CD8-positive, alpha-beta memory T cell (primary cell): ENCODE measurements at regions of chr17 and their contacts with region 1.

Region 1: GRCh38 chr17:7989781-7990655 is 12.4 kb upstream of the GUCY2D start:
- DNase-seq: peak; percentile 83 to 92 (median 88)
- H3K4me3 ChIP-seq: peak overlapping the region; percentile 60
- H3K4me3 Mint-ChIP-seq: peak overlapping the region; percentile 75 to 88 (median 82)
- H3K27ac ChIP-seq: peak overlapping the region; percentile 16
- H3K27ac Mint-ChIP-seq: peak overlapping the region; percentile 37 to 97 (median 82)
- H3K4me1 ChIP-seq: peaks cover 14% of the 10 kb centered on the region
- H3K4me1 Mint-ChIP-seq: peaks cover 18 to 26% (median 25%) of the 10 kb centered on the region in 3 donors
- H3K27me3 ChIP-seq: no peaks in the 10 kb centered on the region
- H3K27me3 Mint-ChIP-seq: peaks cover 2 to 5% of the 10 kb centered on the region in 2 donors

Region 2: DNA sequence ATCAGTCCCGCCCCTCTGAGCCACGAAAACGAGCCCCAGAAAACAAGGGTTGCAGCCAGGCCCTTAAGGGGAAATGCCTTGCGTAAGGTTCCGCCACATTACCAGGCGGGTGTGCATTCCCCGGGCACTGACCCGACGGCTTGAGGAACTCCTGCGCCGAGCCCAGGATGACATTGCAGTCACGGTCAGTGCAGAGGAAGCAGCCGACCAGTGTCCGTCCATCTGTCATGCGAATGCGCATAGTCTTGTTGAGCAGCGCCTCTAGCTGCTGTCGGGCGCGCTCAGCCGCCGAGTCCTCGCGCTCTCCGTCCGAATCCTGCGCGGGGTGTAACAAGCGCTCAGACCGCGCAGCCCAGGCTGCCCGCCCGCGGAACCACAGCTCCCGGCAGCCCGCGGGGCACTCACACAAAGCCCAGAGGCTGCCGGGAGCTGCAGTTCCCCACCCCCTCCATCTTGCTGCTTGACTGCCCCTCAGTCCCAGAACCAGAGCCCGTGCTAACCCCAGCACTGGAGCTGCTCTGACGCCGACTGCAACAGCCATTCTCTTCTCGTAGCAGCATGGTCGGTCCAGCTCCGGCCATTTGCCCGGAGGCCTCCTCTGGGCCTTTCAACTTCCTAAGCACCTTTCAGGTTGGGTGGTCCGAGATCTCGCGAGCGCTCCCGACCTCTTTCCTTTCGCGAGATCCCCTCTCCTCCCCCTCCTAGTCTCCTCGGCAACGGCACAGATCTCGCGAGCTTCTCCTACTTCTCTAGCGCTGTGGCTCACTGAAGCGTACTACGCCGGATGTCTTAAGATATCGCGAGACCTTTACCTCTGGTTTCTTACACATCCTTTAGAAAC is 132.9 kb before region 1 on chr17 and contains the start of gene NAA38:
- CTCF ChIA-PET with region 1: interaction called, 175 read pairs
- POLR2A ChIA-PET with region 1: interaction called, 6 read pairs
- DNase-seq: peak; percentile 89 to 98 (median 97)
- H3K4me3 ChIP-seq: peak within 1 kb of the TSS; percentile 79
- H3K4me3 Mint-ChIP-seq: no peak within 1 kb of the TSS
- H3K27ac ChIP-seq: peak within 1 kb of the TSS; percentile 81
- H3K27ac Mint-ChIP-seq: no peak within 1 kb of the TSS
- H3K4me1 ChIP-seq: peaks cover 24% of the 10 kb centered on the region
- H3K4me1 Mint-ChIP-seq: peaks cover 5 to 7% (median 5%) of the 10 kb centered on the region in 3 donors
- H3K27me3 ChIP-seq: no peaks in the 10 kb centered on the region
- H3K27me3 Mint-ChIP-seq: no peaks in the 10 kb centered on the region
- total RNA-seq, gene NAA38: 58.2 to 65.0 TPM

Region 3: GRCh38 chr17:7897773-7898172 is 92.2 kb before region 1 on chr17:
- CTCF ChIA-PET with region 1: interaction called, 10 read pairs
- POLR2A ChIA-PET with region 1: no interaction called
- DNase-seq: no peak
- H3K4me3 ChIP-seq: no peak overlapping the region
- H3K4me3 Mint-ChIP-seq: no peak overlapping the region
- H3K27ac ChIP-seq: no peak overlapping the region
- H3K27ac Mint-ChIP-seq: peak overlapping the region in 7 of 8 donors; percentile 12 to 70 (median 26)
- H3K4me1 ChIP-seq: no peaks in the 10 kb centered on the region
- H3K4me1 Mint-ChIP-seq: peaks cover 4 to 6% (median 5%) of the 10 kb centered on the region in 3 donors
- H3K27me3 ChIP-seq: no peaks in the 10 kb centered on the region
- H3K27me3 Mint-ChIP-seq: no peaks in the 10 kb centered on the region

Region 4: DNA sequence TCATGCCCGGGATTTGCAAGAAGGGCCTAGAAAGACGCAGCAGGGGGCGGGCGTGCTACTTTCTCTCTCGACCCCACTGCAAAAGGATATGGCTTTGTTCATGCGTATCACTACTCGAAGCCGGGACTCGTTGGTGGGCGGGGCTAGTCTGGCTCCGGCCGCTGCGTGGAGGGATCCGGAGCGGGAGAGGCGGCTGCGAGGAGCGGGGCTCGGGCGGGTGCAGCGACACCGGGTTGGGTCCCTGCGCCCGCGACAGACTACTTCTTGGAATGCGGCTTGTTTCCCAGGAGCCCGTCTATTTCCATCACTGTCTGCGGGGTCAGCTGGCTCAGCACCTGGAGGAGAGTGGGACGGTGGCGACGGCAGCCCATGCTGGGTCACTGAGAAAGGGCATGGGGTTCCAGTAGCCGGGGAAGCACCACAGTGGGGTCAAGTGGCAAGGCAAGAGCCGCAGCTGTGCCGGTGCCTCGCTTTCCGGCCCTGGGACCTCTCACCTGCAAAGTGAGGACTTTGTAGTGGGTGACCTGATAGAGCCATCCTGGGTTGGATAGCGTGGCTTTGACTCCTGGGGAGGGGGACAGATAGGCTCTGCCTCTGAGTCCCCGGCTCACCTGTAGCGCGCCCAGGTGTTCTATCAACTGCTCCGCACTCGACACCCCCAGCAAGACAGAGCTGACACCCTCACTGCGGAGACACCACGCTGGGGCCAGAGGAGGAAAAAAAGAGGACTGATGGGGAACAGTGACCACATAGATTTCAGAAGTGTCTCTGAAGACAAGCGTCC is 67.0 kb before region 1 on chr17:
- CTCF ChIA-PET with region 1: interaction called, 180 read pairs
- POLR2A ChIA-PET with region 1: no interaction called
- DNase-seq: peak; percentile 75 to 87 (median 77)
- H3K4me3 ChIP-seq: peak overlapping the region; percentile 77
- H3K4me3 Mint-ChIP-seq: peak overlapping the region; percentile 82 to 88 (median 86)
- H3K27ac ChIP-seq: peak overlapping the region; percentile 58
- H3K27ac Mint-ChIP-seq: peak overlapping the region; percentile 83 to 96 (median 92)
- H3K4me1 ChIP-seq: peaks cover 14% of the 10 kb centered on the region
- H3K4me1 Mint-ChIP-seq: peaks cover 15 to 22% (median 21%) of the 10 kb centered on the region in 3 donors
- H3K27me3 ChIP-seq: no peaks in the 10 kb centered on the region
- H3K27me3 Mint-ChIP-seq: no peaks in the 10 kb centered on the region

Region 5: DNA sequence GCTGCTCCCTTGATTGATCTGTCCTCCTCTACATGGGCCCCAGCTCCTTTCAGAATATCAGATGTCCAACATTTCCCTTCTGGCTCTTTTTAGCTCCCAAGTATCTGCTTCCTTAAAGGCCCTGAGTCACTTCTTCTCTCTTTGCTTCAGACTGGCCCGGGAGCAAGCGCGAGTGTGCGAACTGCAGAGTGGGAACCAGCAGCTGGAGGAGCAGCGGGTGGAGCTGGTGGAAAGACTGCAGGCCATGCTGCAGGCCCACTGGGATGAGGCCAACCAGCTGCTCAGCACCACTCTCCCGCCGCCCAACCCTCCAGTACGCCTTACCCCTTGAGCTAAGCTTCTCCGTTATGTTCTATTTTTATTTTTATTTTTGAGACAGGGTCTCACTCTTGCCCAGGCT is 45.7 kb before region 1 on chr17:
- CTCF ChIA-PET with region 1: interaction called, 19 read pairs
- POLR2A ChIA-PET with region 1: no interaction called
- DNase-seq: no peak
- H3K4me3 ChIP-seq: no peak overlapping the region
- H3K4me3 Mint-ChIP-seq: no peak overlapping the region
- H3K27ac ChIP-seq: no peak overlapping the region
- H3K27ac Mint-ChIP-seq: no peak overlapping the region
- H3K4me1 ChIP-seq: no peaks in the 10 kb centered on the region
- H3K4me1 Mint-ChIP-seq: no peaks in the 10 kb centered on the region
- H3K27me3 ChIP-seq: no peaks in the 10 kb centered on the region
- H3K27me3 Mint-ChIP-seq: no peaks in the 10 kb centered on the region

Region 6: DNA sequence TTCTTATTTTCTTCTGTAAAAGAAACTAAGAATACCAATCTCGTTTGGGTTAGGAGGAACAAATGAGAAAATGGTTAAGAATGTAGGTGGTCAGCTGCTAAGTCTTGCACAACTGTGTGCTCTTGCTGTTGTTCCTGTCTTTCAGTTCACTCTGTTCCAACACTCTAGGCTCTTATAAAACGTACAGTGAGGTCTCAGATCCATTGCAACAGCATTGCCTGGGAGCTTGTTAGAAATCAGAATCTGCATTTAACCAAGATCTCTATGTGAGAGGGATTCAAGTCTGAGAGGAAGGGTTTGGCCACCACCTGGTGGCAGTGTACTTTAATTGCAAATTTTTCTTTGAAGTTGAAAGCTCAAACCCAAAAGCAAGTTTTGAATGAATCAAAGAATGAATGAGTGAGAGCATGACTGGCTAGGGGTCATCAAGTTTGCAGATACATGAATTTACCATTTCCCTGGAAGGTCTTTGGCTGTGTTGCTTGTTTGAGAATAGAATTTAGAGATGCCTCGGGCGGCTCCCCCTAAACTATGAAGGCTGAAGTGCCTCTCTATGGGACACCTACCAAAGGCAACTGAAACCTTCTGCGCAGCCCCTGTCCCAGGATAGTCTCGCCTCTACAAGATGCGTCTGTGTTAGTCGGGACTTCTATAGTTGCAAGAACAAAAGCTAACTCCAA is 51.4 kb after region 1 on chr17:
- CTCF ChIA-PET with region 1: interaction called, 16 read pairs
- POLR2A ChIA-PET with region 1: no interaction called
- DNase-seq: peak in 2 of 5 donors; percentile 32
- H3K4me3 ChIP-seq: no peak overlapping the region
- H3K4me3 Mint-ChIP-seq: no peak overlapping the region
- H3K27ac ChIP-seq: no peak overlapping the region
- H3K27ac Mint-ChIP-seq: no peak overlapping the region
- H3K4me1 ChIP-seq: no peaks in the 10 kb centered on the region
- H3K4me1 Mint-ChIP-seq: peaks cover 0 to 4% (median 0%) of the 10 kb centered on the region in 3 donors
- H3K27me3 ChIP-seq: no peaks in the 10 kb centered on the region
- H3K27me3 Mint-ChIP-seq: peaks cover 22 to 34% of the 10 kb centered on the region in 2 donors